H1 (cell line): ENCODE measurements at regions of chr1 and their contacts with region 1.

Region 1: DNA sequence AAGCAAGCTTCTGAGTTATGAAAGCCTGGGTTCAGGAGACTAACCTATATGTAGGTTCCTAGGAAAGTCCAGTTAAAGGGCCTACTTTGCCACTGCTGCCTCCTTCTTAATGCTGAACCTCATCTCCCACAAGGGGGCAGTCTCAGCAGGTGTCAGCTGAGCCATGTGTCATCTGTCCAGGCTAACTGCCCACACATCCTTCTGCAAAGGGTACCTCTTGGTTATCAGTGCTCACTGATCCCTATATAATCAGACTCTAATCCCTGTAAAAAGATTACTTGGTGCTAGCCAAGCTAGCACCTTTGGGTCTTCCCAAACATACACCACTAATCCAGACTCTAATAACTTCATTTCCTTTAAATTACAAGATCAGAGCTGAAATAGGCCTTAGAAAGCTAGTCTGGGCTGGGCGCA is 9.0 kb downstream of the PRDX1 start:
- DNase-seq: peak in 1 of 2 experiments; percentile 68
- H3K4me3 ChIP-seq: no peak overlapping the region
- H3K27ac ChIP-seq: no peak overlapping the region
- H3K4me1 ChIP-seq: no peaks in the 10 kb centered on the region
- H3K27me3 ChIP-seq: no peaks in the 10 kb centered on the region
- CTCF ChIP-seq: peak; percentile 75 to 86 (median 80)
- EP300 ChIP-seq: no peak
- POLR2A ChIP-seq: 0 out of 3 replicates have a peak, but pooled peaks of 1 of the 2 experiments have one; percentile 22
- RAD21 ChIP-seq: peak; percentile 70 to 72

Region 2: GRCh38 chr1:45339789-45340570 is 172.7 kb before region 1 on chr1 and contains the starts of genes MUTYH and TOE1:
- CTCF ChIA-PET with region 1: interaction called, 8 read pairs
- POLR2A ChIA-PET with region 1: interaction called, 18 read pairs
- DNase-seq: peak; percentile 88 to 95
- H3K4me3 ChIP-seq: peak within 1 kb of the TSS; percentile 84 to 97 (median 92)
- H3K27ac ChIP-seq: peak within 1 kb of the TSS; percentile 97
- H3K4me1 ChIP-seq: peaks cover 0 to 9% (median 6%) of the 10 kb centered on the region in 4 experiments; a peak in 6 of 7 replicates
- H3K27me3 ChIP-seq: no peaks in the 10 kb centered on the region
- CTCF ChIP-seq: no peak
- EP300 ChIP-seq: no peak
- POLR2A ChIP-seq: peak; percentile 94 to 96
- RAD21 ChIP-seq: no peak
- total RNA-seq, gene MUTYH: 51.9 TPM in 2 replicates
- total RNA-seq, gene TOE1: 14.5 and 15.2 TPM in 2 replicates

Region 3: GRCh38 chr1:45455162-45455561 is 57.5 kb before region 1 on chr1:
- CTCF ChIA-PET with region 1: no interaction called
- POLR2A ChIA-PET with region 1: no interaction called
- DNase-seq: no peak
- H3K4me3 ChIP-seq: no peak overlapping the region
- H3K27ac ChIP-seq: no peak overlapping the region
- H3K4me1 ChIP-seq: peaks cover 0 to 9% (median 3%) of the 10 kb centered on the region in 4 experiments; a peak in 6 of 7 replicates
- H3K27me3 ChIP-seq: no peaks in the 10 kb centered on the region
- CTCF ChIP-seq: no peak
- EP300 ChIP-seq: no peak
- POLR2A ChIP-seq: no peak
- RAD21 ChIP-seq: no peak

Region 4: DNA sequence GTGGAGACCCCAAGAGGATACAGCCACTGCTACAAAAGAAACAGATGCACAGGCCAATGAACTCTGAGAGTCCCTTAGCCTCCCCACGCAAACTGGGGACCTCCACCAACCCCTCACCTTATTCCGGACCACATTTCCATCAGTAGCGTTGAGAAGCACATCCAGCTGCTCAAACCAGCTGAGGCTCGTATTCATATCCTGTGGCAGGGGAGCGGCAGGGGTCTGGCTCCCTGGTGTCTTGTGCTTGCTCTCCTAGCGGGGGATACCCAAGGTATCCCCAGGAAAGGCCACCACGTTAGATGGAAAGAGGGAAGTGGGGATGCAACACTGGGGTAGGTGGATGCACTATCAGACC is 13.3 kb before region 1 on chr1:
- CTCF ChIA-PET with region 1: interaction called, 10 read pairs
- POLR2A ChIA-PET with region 1: interaction called, 429 read pairs
- DNase-seq: no peak
- H3K4me3 ChIP-seq: peak overlapping the region; percentile 65 to 86 (median 72)
- H3K27ac ChIP-seq: no peak overlapping the region
- H3K4me1 ChIP-seq: peaks cover 0 to 10% (median 3%) of the 10 kb centered on the region in 4 experiments; a peak in 6 of 7 replicates
- H3K27me3 ChIP-seq: no peaks in the 10 kb centered on the region
- CTCF ChIP-seq: no peak
- EP300 ChIP-seq: no peak
- POLR2A ChIP-seq: no peak
- RAD21 ChIP-seq: no peak

Region 5: DNA sequence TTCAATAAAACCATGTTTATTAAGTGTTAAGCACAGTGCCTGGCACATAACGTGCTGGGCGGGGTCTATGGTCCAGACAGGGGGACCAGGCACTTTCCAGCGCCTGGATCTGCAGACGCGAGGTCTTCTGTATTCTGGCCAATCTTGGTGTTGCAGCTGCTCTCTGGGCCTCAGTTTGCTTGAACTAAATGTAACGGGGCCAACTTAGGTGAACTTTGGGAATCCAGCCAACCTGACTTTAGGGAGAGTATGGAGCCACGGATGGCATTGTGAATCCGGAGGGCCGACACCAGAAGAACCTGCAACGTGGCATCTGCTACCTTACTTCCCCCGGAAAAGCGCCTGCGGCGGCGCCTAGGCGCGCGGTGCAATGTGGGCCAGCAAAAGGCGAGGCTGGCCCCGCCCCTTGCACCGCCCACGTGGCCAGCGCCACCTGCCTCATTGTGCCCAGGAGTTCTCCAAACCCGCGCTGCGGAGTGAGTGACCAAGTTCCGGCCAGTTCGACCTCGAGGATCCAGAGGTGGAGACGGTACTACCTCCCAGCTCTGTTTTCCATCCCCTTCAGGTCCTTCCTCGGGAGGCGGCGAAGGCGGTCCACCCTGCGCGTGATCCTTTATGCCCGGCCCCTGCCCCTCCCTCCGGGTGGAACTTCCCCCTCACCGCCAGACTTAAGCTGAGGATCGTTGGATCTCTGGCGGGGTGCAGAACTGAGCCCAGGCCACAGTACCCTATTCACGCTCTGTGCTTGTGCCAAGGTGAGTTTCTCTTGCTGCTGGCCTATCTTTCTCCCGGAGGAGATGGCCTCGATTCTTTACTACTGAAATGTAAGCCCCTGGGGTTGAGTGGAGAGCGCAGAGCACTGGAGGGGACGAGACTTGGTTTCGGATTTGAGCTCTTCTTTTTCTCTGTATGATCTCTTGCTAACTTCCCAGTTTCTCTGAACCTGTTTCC is 38.0 kb after region 1 on chr1 and contains the start of gene AKR1A1:
- CTCF ChIA-PET with region 1: interaction called, 21 read pairs
- POLR2A ChIA-PET with region 1: interaction called, 741 read pairs
- DNase-seq: peak; percentile 78 to 93
- H3K4me3 ChIP-seq: peak within 1 kb of the TSS; percentile 82 to 95 (median 90)
- H3K27ac ChIP-seq: peak within 1 kb of the TSS; percentile 88
- H3K4me1 ChIP-seq: peaks cover 0 to 4% (median 1%) of the 10 kb centered on the region in 4 experiments; a peak in 3 of 7 replicates
- H3K27me3 ChIP-seq: no peaks in the 10 kb centered on the region
- CTCF ChIP-seq: no peak; a peak in 1 of 4 replicates
- EP300 ChIP-seq: peak in 1 of 2 experiments; percentile 10; a peak in 1 of 3 replicates
- POLR2A ChIP-seq: peak; percentile 90 to 99
- RAD21 ChIP-seq: no peak
- total RNA-seq, gene AKR1A1: 334 and 344 TPM in 2 replicates

Region 6: DNA sequence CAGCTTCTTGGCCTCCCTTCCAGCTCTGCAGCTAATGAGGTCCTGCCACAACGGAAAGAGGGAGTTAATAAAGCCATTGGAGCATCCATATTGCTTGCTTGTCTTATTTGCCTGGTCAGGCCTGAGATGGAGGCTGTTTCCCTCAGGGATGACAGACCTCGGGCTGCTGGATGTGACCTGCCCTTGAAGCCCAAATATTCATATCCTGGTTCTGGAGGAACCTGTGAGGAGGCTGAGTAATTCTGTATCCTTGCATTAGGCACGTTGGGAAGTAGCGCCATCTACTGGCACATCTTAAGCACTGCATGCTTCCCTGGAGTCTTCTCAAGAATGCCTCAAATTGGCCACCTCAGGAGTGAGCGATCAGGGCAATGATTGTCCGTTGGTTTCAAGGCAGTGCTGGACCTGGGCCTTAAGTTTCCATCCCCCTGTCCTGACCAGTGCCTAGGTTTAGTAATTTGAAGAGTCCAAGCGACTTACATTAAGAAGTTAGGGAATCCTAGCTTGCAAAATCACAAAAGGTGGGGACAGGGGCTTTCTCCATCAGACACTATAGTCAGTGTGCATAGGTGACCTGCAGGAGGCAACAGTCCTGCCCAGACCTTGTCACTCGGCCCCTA is 57.4 kb after region 1 on chr1:
- CTCF ChIA-PET with region 1: interaction called, 133 read pairs
- POLR2A ChIA-PET with region 1: interaction called, 107 read pairs
- DNase-seq: peak in 1 of 2 experiments; percentile 83
- H3K4me3 ChIP-seq: no peak overlapping the region
- H3K27ac ChIP-seq: no peak overlapping the region
- H3K4me1 ChIP-seq: peaks cover 0 to 12% (median 5%) of the 10 kb centered on the region in 4 experiments; a peak in 6 of 7 replicates
- H3K27me3 ChIP-seq: no peaks in the 10 kb centered on the region
- CTCF ChIP-seq: peak; percentile 59 to 96 (median 94)
- EP300 ChIP-seq: no peak
- POLR2A ChIP-seq: peak; percentile 30 to 35; a peak in 1 of 3 replicates
- RAD21 ChIP-seq: peak; percentile 87 to 93